ENCODE measurements at regions of chr9 and their contacts with region 1.

Region 1: GRCh38 chr9:22452415-22453010 is 5.9 kb downstream of the DMRTA1 start:
- DNase-seq: peak; percentile 40
- H3K4me3 ChIP-seq: no peak overlapping the region
- H3K27ac ChIP-seq: no peak overlapping the region
- H3K4me1 ChIP-seq: no peaks in the 10 kb centered on the region
- H3K27me3 ChIP-seq: no peaks in the 10 kb centered on the region
- CTCF ChIP-seq: peak; percentile 68

Region 2: DNA sequence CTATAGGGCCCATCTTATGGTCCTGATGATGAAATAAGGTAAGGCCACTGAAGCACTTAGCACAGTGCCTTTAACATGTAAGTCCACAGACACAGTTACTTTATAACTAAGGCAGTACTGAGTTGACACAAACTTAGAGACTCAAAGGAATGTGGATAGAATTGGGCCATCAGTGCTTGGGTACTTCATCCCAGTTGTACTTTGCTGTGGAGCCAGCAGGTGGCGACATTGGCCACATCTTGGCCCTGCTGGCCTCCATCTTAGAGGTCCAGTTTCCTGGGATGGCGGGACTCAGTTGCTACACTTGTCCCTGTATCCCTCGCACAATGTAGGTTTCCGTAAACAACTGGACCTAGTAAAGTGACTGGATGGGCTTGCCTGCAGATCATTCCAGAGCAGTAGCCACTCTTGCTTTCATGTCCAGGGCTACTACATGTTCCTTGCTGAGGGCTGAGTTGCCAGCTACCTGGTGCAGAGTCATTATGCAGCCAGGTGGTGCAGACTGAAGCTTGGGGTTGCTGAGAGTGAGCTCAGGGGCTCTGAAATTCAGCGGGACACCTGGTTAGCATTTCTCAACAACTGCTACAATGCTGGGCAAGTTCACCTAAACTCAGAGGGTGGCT is 639.5 kb before region 1 on chr9:
- CTCF ChIA-PET with region 1: interaction called, 5 read pairs
- POLR2A ChIA-PET with region 1: no interaction called
- intact Hi-C with region 1: loop called (anchors 1 kb)
- DNase-seq: peak; percentile 57
- H3K4me3 ChIP-seq: no peak overlapping the region
- H3K27ac ChIP-seq: no peak overlapping the region
- H3K4me1 ChIP-seq: peaks cover 13% of the 10 kb centered on the region
- H3K27me3 ChIP-seq: no peaks in the 10 kb centered on the region
- CTCF ChIP-seq: peak; percentile 65

Region 3: GRCh38 chr9:22913518-22913917 is 461.0 kb after region 1 on chr9:
- CTCF ChIA-PET with region 1: no interaction called
- POLR2A ChIA-PET with region 1: no interaction called
- intact Hi-C with region 1: no loop called
- DNase-seq: no peak
- H3K4me3 ChIP-seq: no peak overlapping the region
- H3K27ac ChIP-seq: no peak overlapping the region
- H3K4me1 ChIP-seq: no peaks in the 10 kb centered on the region
- H3K27me3 ChIP-seq: no peaks in the 10 kb centered on the region
- CTCF ChIP-seq: no peak